PC-9 (cell line): ENCODE measurements at regions of chr19 and their contacts with region 1.

Region 1: DNA sequence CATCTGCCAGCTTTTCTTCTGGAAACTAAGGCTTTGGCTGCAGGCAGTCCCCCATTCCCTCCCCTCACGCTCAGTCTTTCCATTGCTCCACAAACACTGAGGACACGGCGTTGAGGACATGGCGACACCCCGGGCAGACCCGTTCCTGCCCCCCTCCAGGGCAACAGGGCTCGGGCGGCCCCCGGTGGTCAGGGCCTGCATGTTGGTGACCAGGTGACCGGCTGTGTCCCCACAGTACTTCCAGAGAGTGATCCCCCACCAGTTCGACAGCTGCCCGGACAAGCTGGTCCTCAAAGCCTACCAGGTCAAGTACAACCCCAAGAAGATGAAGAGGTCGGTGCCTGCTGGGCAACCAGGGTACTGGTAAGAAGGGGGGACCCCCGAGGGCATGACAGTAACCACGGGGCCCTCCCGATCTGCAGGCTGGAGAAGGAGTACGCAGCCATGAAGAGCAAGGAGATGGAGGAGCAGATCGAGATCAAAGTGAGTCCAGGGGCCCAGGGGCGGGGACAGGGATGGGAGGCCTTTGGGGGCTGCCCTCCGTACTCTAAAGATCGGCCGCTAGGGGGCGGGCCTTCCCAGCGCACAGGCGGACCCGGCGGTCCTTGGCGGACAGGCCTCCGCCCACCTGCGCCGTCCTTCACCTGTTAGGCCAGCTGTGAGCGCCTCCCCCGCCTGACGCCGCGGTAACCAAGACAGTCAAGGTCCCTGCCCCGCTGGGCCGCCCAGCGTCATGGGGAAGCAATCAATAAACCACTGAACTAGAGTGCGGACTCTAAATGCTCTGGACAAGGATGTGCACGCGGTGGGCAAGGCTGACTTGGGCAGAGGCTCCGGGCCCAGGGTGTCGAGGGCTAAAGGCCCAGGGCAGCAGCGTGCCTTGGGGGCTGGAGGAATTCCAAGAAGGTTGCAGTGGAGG is 21.1 kb downstream of the PRR36 start:
- DNase-seq: peak; percentile 80 to 87
- H3K4me3 ChIP-seq: peak overlapping the region; percentile 24; the same call in 1 of the 2 replicates
- H3K27ac ChIP-seq: no peak overlapping the region
- H3K4me1 ChIP-seq: peaks cover 14% of the 10 kb centered on the region
- H3K27me3 ChIP-seq: no peaks in the 10 kb centered on the region
- CTCF ChIP-seq: peak; percentile 99

Region 2: GRCh38 chr19:7191946-7192691 is 661.0 kb before region 1 on chr19:
- CTCF ChIA-PET with region 1: no interaction called
- POLR2A ChIA-PET with region 1: no interaction called
- intact Hi-C with region 1: no loop called
- DNase-seq: no peak
- H3K4me3 ChIP-seq: no peak overlapping the region
- H3K27ac ChIP-seq: no peak overlapping the region
- H3K4me1 ChIP-seq: no peaks in the 10 kb centered on the region
- H3K27me3 ChIP-seq: no peaks in the 10 kb centered on the region
- CTCF ChIP-seq: no peak

Region 3: DNA sequence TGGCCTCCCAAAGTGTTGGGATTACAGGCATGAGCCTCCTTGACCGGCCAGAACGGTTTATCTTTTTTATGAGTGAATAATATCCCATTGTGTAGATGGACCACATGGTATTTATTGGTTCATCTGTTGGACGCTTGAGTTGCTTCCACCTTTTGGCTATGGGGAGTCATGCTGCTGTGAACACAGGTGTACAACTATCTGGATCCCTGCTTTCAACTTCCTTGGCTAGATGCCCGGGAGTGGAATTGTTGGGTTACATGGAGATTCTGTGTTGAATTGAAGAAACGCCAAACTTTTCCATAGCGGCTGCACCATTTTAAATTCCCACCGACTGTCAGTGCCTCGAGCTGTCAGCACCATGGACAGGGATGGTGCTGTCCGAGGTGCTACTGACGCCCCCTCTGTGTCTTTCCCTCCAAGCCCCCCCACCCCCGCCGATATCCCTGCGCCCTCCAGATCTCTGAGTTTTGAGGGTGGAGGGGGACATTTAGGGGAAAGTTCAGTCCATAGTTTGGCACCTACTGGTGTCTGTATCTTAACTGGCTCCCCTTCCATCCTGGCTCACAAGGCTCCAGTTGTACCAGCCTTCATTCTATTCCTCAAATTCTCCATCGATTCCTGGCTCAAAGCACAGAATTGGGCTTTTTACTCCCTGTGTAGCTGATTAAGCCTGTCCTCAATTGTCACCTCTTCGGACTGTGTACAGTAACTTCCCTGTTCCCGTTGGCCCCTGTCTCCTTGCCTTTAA is 290.3 kb before region 1 on chr19:
- CTCF ChIA-PET with region 1: no interaction called
- POLR2A ChIA-PET with region 1: no interaction called
- intact Hi-C with region 1: loop called (anchors 1 kb)
- DNase-seq: no peak
- H3K4me3 ChIP-seq: no peak overlapping the region
- H3K27ac ChIP-seq: no peak overlapping the region
- H3K4me1 ChIP-seq: no peaks in the 10 kb centered on the region
- H3K27me3 ChIP-seq: no peaks in the 10 kb centered on the region
- CTCF ChIP-seq: no peak

Region 4: GRCh38 chr19:7748770-7749209 is 104.3 kb before region 1 on chr19:
- CTCF ChIA-PET with region 1: no interaction called
- POLR2A ChIA-PET with region 1: no interaction called
- intact Hi-C with region 1: loop called (anchors 2 kb)
- DNase-seq: peak; percentile 30 to 81
- H3K4me3 ChIP-seq: no peak overlapping the region
- H3K27ac ChIP-seq: no peak overlapping the region
- H3K4me1 ChIP-seq: 0 out of 2 replicates have a peak, but pooled peaks cover 5% of the 10 kb centered on the region
- H3K27me3 ChIP-seq: peaks cover 11% of the 10 kb centered on the region; the same call in 1 of the 2 replicates
- CTCF ChIP-seq: peak; percentile 64

Region 5: GRCh38 chr19:7903244-7904073 is 50.3 kb after region 1 on chr19 and contains the start of gene MAP2K7:
- CTCF ChIA-PET with region 1: interaction called, 3 read pairs
- POLR2A ChIA-PET with region 1: no interaction called
- intact Hi-C with region 1: loop called (anchors 5 kb)
- DNase-seq: peak; percentile 97 to 100
- H3K4me3 ChIP-seq: peak within 1 kb of the TSS; percentile 86
- H3K27ac ChIP-seq: peak within 1 kb of the TSS; percentile 68
- H3K4me1 ChIP-seq: peaks cover 16% of the 10 kb centered on the region; the same call in 1 of the 2 replicates
- H3K27me3 ChIP-seq: no peaks in the 10 kb centered on the region
- CTCF ChIP-seq: peak; percentile 51; the same call in 1 of the 2 replicates
- total RNA-seq, gene MAP2K7: 52.4 and 54.0 TPM in 2 replicates

Region 6: GRCh38 chr19:8252922-8253589 is 399.9 kb after region 1 on chr19:
- CTCF ChIA-PET with region 1: no interaction called
- POLR2A ChIA-PET with region 1: no interaction called
- intact Hi-C with region 1: loop called (anchors 10 kb)
- DNase-seq: peak; percentile 65 to 79
- H3K4me3 ChIP-seq: no peak overlapping the region
- H3K27ac ChIP-seq: no peak overlapping the region
- H3K4me1 ChIP-seq: no peaks in the 10 kb centered on the region
- H3K27me3 ChIP-seq: no peaks in the 10 kb centered on the region
- CTCF ChIP-seq: peak; percentile 99